CD4-positive, alpha-beta T cell (primary cell): ENCODE measurements at regions of chr16 and their contacts with region 1.

Region 1: GRCh38 chr16:85010931-85011845 is at the start of gene ZDHHC7:
- DNase-seq: peak; percentile 75 to 95 (median 80)
- ATAC-seq: peak; percentile 93
- H3K4me3 ChIP-seq: peak within 1 kb of the TSS; percentile 98
- H3K4me3 Mint-ChIP-seq: peak within 1 kb of the TSS; percentile 99
- H3K27ac ChIP-seq: peak within 1 kb of the TSS; percentile 94 to 98
- H3K27ac Mint-ChIP-seq: peak within 1 kb of the TSS; percentile 96
- H3K4me1 ChIP-seq: peaks cover 31% of the 10 kb centered on the region
- H3K4me1 Mint-ChIP-seq: peaks cover 54% of the 10 kb centered on the region
- H3K27me3 ChIP-seq: no peaks in the 10 kb centered on the region
- H3K27me3 Mint-ChIP-seq: no peaks in the 10 kb centered on the region
- CTCF ChIP-seq: peak; percentile 25
- total RNA-seq, gene ZDHHC7: 39.8 to 44.6 TPM

Region 2: DNA sequence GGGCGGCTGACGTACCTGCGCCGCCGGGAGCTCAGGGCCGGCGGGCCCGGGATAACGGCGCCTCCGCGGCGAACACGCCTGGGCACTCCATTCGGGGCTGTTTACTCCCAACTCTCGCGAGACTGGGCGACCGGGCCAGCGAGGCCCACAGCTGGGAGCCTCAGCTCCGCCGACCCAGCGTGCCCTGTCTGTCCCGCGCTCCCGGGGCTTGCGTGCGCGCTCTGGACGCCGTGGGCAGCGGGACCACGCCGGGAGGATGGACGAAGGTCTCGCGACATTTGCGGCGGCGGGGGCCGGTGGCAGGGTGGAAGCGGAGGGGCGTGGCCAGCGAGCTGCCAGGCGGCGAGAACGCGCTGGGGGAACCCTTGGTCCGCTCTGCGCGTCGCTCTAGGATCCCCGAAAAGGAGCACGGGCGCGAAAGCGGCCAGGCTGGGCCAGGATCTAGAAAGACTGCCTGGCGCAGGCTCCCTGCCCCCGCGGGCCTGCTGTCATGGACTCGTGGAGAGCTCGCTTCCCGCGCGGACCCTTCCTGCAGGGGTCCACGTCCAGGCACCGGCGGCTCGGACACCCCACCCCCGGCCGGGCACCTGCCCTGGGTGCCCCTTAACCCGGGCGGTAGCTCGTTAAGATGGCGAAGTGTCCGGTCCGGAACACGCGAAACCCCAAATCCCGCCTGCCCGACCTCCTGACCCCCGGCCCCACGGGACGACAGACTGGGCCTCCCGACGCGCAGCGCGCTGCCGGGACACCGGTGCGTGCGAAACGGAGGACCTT is 894.3 kb before region 1 on chr16 and contains the start of gene MBTPS1:
- CTCF ChIA-PET with region 1: no interaction called
- POLR2A ChIA-PET with region 1: no interaction called
- intact Hi-C with region 1: loop called in 1 of 2 experiments (anchors 10 kb)
- DNase-seq: peak; percentile 94 to 99 (median 98)
- ATAC-seq: peak; percentile 84
- H3K4me3 ChIP-seq: peak within 1 kb of the TSS; percentile 91
- H3K4me3 Mint-ChIP-seq: peak within 1 kb of the TSS; percentile 96
- H3K27ac ChIP-seq: peak within 1 kb of the TSS; percentile 84 to 85
- H3K27ac Mint-ChIP-seq: peak within 1 kb of the TSS; percentile 98
- H3K4me1 ChIP-seq: peaks cover 37% of the 10 kb centered on the region
- H3K4me1 Mint-ChIP-seq: peaks cover 34% of the 10 kb centered on the region
- H3K27me3 ChIP-seq: no peaks in the 10 kb centered on the region
- H3K27me3 Mint-ChIP-seq: no peaks in the 10 kb centered on the region
- CTCF ChIP-seq: peak; percentile 49
- total RNA-seq, gene MBTPS1: 121 to 122 TPM

Region 3: GRCh38 chr16:85055503-85056210 is 44.5 kb after region 1 on chr16:
- CTCF ChIA-PET with region 1: interaction called, 5 read pairs
- POLR2A ChIA-PET with region 1: interaction called, 19 read pairs
- intact Hi-C with region 1: loop called (anchors 1 to 5 kb)
- DNase-seq: peak; percentile 33 to 94 (median 62)
- ATAC-seq: peak; percentile 92
- H3K4me3 ChIP-seq: peak overlapping the region; percentile 38
- H3K4me3 Mint-ChIP-seq: peak overlapping the region; percentile 79
- H3K27ac ChIP-seq: peak overlapping the region; percentile 68 to 78
- H3K27ac Mint-ChIP-seq: peak overlapping the region; percentile 92
- H3K4me1 ChIP-seq: peaks cover 40% of the 10 kb centered on the region
- H3K4me1 Mint-ChIP-seq: peaks cover 52% of the 10 kb centered on the region
- H3K27me3 ChIP-seq: no peaks in the 10 kb centered on the region
- H3K27me3 Mint-ChIP-seq: no peaks in the 10 kb centered on the region
- CTCF ChIP-seq: no peak

Region 4: DNA sequence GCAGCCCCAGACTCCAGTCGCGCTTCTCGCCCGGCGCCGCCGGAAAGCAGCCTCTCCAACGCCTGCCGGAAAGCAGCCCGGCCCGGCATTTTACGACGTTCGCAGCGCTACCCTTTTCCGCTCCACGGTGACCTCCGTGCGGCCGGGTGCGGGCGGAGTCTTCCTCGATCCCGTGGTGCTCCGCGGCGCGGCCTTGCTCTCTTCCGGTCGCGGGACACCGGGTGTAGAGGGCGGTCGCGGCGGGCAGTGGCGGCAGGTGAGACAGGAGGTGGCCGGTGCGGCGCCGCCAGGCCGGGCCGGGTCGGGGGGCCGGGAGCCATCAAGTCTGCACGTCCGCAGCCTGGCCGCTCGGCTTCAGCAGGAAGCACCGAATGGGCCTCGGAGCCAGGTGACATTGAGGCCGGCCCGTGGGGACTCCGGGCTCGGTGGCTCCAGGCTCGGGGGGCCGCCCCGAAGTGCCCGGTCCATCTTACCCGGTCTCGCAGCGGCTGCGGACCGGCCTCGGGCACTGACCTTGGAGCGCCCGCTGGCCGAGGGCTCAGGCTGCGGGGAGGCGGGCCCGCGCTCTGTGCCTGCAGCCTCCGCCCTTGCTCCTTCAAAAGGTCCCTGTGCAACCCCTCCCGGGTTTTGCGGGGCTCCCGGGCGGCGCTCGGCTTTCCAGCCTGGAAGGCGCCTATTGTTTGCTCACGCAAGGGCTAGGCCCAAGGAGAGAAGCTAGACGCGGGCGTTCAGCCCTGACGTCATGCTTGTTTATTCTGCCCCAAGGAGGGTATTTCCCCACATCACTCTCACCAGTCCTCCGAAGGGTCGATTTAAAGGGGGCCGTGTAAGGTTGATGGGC is 788.5 kb after region 1 on chr16 and contains the starts of genes COX4I1 and EMC8:
- CTCF ChIA-PET with region 1: no interaction called
- POLR2A ChIA-PET with region 1: no interaction called
- intact Hi-C with region 1: loop called in 1 of 2 experiments (anchors 10 kb)
- DNase-seq: peak; percentile 85 to 96 (median 90)
- ATAC-seq: peak; percentile 79
- H3K4me3 ChIP-seq: peak within 1 kb of the TSS; percentile 84
- H3K4me3 Mint-ChIP-seq: peak within 1 kb of the TSS; percentile 97
- H3K27ac ChIP-seq: peak within 1 kb of the TSS; percentile 61 to 95
- H3K27ac Mint-ChIP-seq: peak within 1 kb of the TSS; percentile 99
- H3K4me1 ChIP-seq: peaks cover 40% of the 10 kb centered on the region
- H3K4me1 Mint-ChIP-seq: peaks cover 78% of the 10 kb centered on the region
- H3K27me3 ChIP-seq: no peaks in the 10 kb centered on the region
- H3K27me3 Mint-ChIP-seq: no peaks in the 10 kb centered on the region
- CTCF ChIP-seq: no peak
- total RNA-seq, gene COX4I1: 749 to 750 TPM
- total RNA-seq, gene EMC8: 38.9 to 41.7 TPM